ENCODE measurements at regions of chr19 and their contacts with region 1.

Region 1: GRCh38 chr19:40465557-40466150 is at the start of gene BLVRB:
- DNase-seq: peak; percentile 100
- H3K4me3 Mint-ChIP-seq: peak within 1 kb of the TSS; percentile 99
- H3K27ac Mint-ChIP-seq: peak within 1 kb of the TSS; percentile 83
- H3K4me1 Mint-ChIP-seq: peaks cover 32% of the 10 kb centered on the region
- H3K27me3 Mint-ChIP-seq: peaks cover 17% of the 10 kb centered on the region
- CTCF ChIP-seq: no peak
- total RNA-seq, gene BLVRB: 107 and 118 TPM in 2 replicates

Region 2: GRCh38 chr19:40398417-40399131 is 67.1 kb before region 1 on chr19:
- CTCF ChIA-PET with region 1: no interaction called
- intact Hi-C with region 1: no loop called
- DNase-seq: no peak
- H3K4me3 Mint-ChIP-seq: no peak overlapping the region
- H3K27ac Mint-ChIP-seq: no peak overlapping the region
- H3K4me1 Mint-ChIP-seq: peaks cover 19% of the 10 kb centered on the region
- H3K27me3 Mint-ChIP-seq: peaks cover 15% of the 10 kb centered on the region
- CTCF ChIP-seq: no peak

Region 3: GRCh38 chr19:40425450-40426287 is 40.0 kb before region 1 on chr19 and contains the start of gene SERTAD1:
- CTCF ChIA-PET with region 1: interaction called, 29 read pairs
- intact Hi-C with region 1: no loop called
- DNase-seq: peak; percentile 100
- H3K4me3 Mint-ChIP-seq: peak within 1 kb of the TSS; percentile 88
- H3K27ac Mint-ChIP-seq: peak within 1 kb of the TSS; percentile 93
- H3K4me1 Mint-ChIP-seq: peaks cover 9% of the 10 kb centered on the region
- H3K27me3 Mint-ChIP-seq: no peaks in the 10 kb centered on the region
- CTCF ChIP-seq: peak; percentile 93
- total RNA-seq, gene SERTAD1: 12.3 and 15.4 TPM in 2 replicates

Region 4: GRCh38 chr19:40523322-40524047 is 57.8 kb after region 1 on chr19:
- CTCF ChIA-PET with region 1: interaction called, 11 read pairs
- intact Hi-C with region 1: loop called (anchors 5 kb)
- DNase-seq: peak; percentile 85
- H3K4me3 Mint-ChIP-seq: no peak overlapping the region
- H3K27ac Mint-ChIP-seq: no peak overlapping the region
- H3K4me1 Mint-ChIP-seq: peaks cover 16% of the 10 kb centered on the region
- H3K27me3 Mint-ChIP-seq: peaks cover 59% of the 10 kb centered on the region
- CTCF ChIP-seq: peak; percentile 81

Region 5: GRCh38 chr19:40549007-40549708 is 83.5 kb after region 1 on chr19:
- CTCF ChIA-PET with region 1: interaction called, 11 read pairs
- intact Hi-C with region 1: no loop called
- DNase-seq: peak; percentile 90
- H3K4me3 Mint-ChIP-seq: peak overlapping the region; percentile 36
- H3K27ac Mint-ChIP-seq: no peak overlapping the region
- H3K4me1 Mint-ChIP-seq: no peaks in the 10 kb centered on the region
- H3K27me3 Mint-ChIP-seq: peaks cover 55% of the 10 kb centered on the region
- CTCF ChIP-seq: peak; percentile 51

Region 6: DNA sequence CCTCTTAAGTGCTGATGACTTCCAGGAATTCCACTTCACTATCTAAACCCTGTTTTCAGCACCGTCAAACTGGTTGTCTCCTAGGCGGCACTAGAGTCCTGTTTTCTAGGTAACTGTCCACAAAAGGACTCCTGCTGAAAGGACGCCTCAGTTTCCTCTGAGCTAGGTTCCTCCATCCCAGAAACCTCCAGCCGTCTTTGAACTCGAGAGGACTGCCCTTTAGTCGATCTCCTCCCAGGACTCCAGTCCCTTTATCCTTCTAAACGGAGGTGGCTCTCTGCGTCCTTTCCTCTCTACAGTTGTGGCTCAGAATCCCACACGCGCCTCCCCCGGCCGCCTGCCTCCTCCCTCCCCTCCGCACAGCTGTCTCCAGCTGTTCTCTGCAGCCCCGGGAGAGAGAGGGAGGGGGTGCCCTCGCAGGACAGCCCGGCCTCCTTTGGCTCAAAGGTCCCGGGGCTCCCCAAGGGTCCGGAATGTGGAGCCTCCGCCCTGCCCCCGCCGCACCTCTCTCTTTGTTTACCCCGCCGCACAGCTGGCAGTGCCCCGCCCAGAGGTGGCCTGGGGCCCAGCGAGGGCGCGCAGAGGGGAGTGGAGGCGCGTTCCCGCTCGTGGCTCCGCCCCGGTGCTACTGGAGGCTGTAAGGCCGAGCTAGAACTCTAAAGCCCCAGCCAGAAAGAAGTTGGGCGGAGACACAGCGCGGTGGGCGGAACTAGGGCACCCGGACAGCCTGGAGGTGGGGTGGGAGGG is 137.9 kb after region 1 on chr19:
- CTCF ChIA-PET with region 1: interaction called, 20 read pairs
- intact Hi-C with region 1: loop called (anchors 10 kb)
- DNase-seq: peak; percentile 99
- H3K4me3 Mint-ChIP-seq: peak overlapping the region; percentile 69
- H3K27ac Mint-ChIP-seq: peak overlapping the region; percentile 62
- H3K4me1 Mint-ChIP-seq: peaks cover 77% of the 10 kb centered on the region
- H3K27me3 Mint-ChIP-seq: peaks cover 60% of the 10 kb centered on the region
- CTCF ChIP-seq: no peak

Measured in Calu3 (cell line).